GM18951 (cell line): ENCODE measurements at regions of chrX and their contacts with region 1.

Region 1: GRCh38 chrX:150772150-150772970 is 79.2 kb downstream of the MTMR1 start:
- POLR2A ChIP-seq: no peak

Region 2: DNA sequence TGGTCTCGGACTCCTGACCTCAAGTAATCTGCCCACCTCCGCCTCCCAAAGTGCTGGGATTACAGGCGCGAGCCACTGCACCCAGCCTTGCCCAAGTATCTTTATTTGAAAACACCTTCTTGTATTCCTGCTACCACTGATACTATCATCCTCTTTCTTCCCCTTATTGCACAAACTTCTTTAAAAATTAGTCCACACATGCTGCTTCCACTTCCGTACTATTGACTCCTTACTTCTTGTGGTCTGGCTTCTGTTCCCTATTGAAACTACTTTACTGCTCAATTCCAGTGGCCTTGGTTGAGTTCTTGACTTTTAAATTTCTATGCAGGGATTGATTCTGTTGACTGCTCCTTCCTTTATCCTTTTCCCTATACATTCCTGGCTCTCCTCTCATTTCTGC is 165.2 kb before region 1 on chrX:
- in situ Hi-C with region 1: no loop called
- POLR2A ChIP-seq: no peak

Region 3: GRCh38 chrX:150982788-150983520 is 210.6 kb after region 1 on chrX and contains the start of gene HMGB3:
- in situ Hi-C with region 1: loop called (anchors 25 kb)
- POLR2A ChIP-seq: peak; percentile 57

Region 4: DNA sequence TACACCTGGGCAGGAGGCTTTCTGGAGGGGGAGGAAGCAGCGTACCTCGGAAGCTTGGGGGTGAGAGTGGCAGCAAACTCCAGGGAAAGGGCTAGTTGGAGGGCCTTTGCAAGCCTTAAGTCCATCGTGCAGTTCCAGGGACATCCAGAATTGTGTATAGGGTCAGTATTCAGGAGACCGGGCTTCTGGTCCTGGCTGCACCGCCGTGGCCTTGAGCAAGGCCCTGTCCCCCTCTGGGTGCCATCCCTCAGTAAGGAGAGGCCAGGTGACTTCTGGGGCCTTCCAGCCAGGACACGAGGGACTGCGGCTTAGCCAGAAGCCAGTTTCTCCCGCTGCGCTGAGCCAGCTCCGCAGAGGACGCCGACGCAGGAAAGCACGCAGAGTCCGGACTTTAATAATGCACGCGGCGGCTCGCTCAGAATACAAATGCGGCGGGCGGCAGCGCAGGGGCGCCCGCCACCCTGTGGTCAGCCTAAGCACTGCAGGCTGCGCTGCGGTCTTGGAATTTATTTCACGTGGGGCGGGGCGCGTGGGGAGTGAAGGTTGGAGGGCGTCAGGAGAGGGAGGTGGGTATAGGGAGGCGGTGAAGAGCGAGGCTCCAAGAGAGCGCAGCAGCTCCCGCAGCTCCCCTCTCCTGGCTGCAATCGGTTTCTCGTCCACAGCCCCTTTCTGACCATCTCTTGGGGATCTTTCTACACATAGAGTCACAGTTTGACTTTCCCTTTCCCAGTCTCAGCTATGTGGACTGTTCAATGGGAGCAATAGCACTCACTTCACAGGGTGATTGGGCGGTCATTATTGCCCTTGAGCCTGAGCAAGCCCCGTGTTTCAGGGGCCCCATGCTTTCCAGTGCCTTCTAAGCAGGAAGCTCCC is 310.0 kb after region 1 on chrX:
- in situ Hi-C with region 1: loop called (anchors 10 kb)
- POLR2A ChIP-seq: no peak